CD8-positive, alpha-beta T cell (primary cell): ENCODE measurements at regions of chr3 and their contacts with region 1.

Region 1: GRCh38 chr3:170869645-170870593 is at the start of gene RPL22L1:
- DNase-seq: peak; percentile 85 to 97 (median 93)
- ATAC-seq: peak; percentile 93
- H3K4me3 ChIP-seq: peak within 1 kb of the TSS; percentile 73 to 77
- H3K4me3 Mint-ChIP-seq: peak within 1 kb of the TSS; percentile 94
- H3K27ac ChIP-seq: peak within 1 kb of the TSS; percentile 84 to 94
- H3K27ac Mint-ChIP-seq: peak within 1 kb of the TSS; percentile 97
- H3K4me1 ChIP-seq: peaks cover 27% of the 10 kb centered on the region
- H3K4me1 Mint-ChIP-seq: peaks cover 28% of the 10 kb centered on the region
- H3K27me3 ChIP-seq: no peaks in the 10 kb centered on the region
- H3K27me3 Mint-ChIP-seq: no peaks in the 10 kb centered on the region
- CTCF ChIP-seq: no peak
- total RNA-seq, gene RPL22L1: 54.3 to 56.8 TPM

Region 2: GRCh38 chr3:169812332-169813235 is 1057.3 kb before region 1 on chr3 and contains the starts of genes LRRC34 and LRRIQ4:
- CTCF ChIA-PET with region 1: no interaction called
- POLR2A ChIA-PET with region 1: no interaction called
- intact Hi-C with region 1: loop called in 1 of 2 experiments (anchors 2 kb)
- DNase-seq: peak; percentile 12 to 79 (median 68)
- ATAC-seq: peak; percentile 37
- H3K4me3 ChIP-seq: peak within 1 kb of the TSS; percentile 47 to 54
- H3K4me3 Mint-ChIP-seq: peak within 1 kb of the TSS; percentile 89
- H3K27ac ChIP-seq: peak within 1 kb of the TSS; percentile 2
- H3K27ac Mint-ChIP-seq: peak within 1 kb of the TSS; percentile 74
- H3K4me1 ChIP-seq: peaks cover 16% of the 10 kb centered on the region
- H3K4me1 Mint-ChIP-seq: peaks cover 28% of the 10 kb centered on the region
- H3K27me3 ChIP-seq: no peaks in the 10 kb centered on the region
- H3K27me3 Mint-ChIP-seq: no peaks in the 10 kb centered on the region
- CTCF ChIP-seq: no peak
- total RNA-seq, gene LRRC34: 0.36 to 0.54 TPM
- total RNA-seq, gene LRRIQ4: not detected

Region 3: GRCh38 chr3:170357176-170357919 is 512.6 kb before region 1 on chr3 and contains the start of gene SKIL:
- CTCF ChIA-PET with region 1: no interaction called
- POLR2A ChIA-PET with region 1: no interaction called
- intact Hi-C with region 1: loop called (anchors 1 to 10 kb)
- DNase-seq: peak; percentile 94 to 99 (median 97)
- ATAC-seq: peak; percentile 69
- H3K4me3 ChIP-seq: peak within 1 kb of the TSS; percentile 55 to 76
- H3K4me3 Mint-ChIP-seq: peak within 1 kb of the TSS; percentile 95
- H3K27ac ChIP-seq: peak within 1 kb of the TSS; percentile 91 to 96
- H3K27ac Mint-ChIP-seq: peak within 1 kb of the TSS; percentile 99
- H3K4me1 ChIP-seq: peaks cover 24% of the 10 kb centered on the region
- H3K4me1 Mint-ChIP-seq: peaks cover 52% of the 10 kb centered on the region
- H3K27me3 ChIP-seq: no peaks in the 10 kb centered on the region
- H3K27me3 Mint-ChIP-seq: no peaks in the 10 kb centered on the region
- CTCF ChIP-seq: no peak
- total RNA-seq, gene SKIL: 160 to 177 TPM